Gastrocnemius medialis (tissue), 4 donors: ENCODE measurements at regions of chr5 and their contacts with region 1.

Region 1: GRCh38 chr5:43556857-43557542 is at the start of gene PAIP1:
- DNase-seq: peak; percentile 65 to 77
- ATAC-seq: peak; percentile 91 to 92
- H3K4me3 ChIP-seq: peak within 1 kb of the TSS; percentile 66 to 96 (median 73)
- H3K27ac ChIP-seq: peak within 1 kb of the TSS; percentile 86 to 98 (median 94)
- H3K4me1 ChIP-seq: peaks cover 38 to 40% of the 10 kb centered on the region in 2 donors
- H3K27me3 ChIP-seq: no peaks in the 10 kb centered on the region
- CTCF ChIP-seq: peak; percentile 33 to 85 (median 78)
- POLR2A ChIP-seq: peak; percentile 6 to 39
- total RNA-seq, gene PAIP1: 123 to 184 (median 161) TPM

Region 2: GRCh38 chr5:43514816-43515677 is 42.0 kb before region 1 on chr5 and contains the start of gene C5orf34:
- in situ Hi-C with region 1: no loop called
- intact Hi-C with region 1: loop called (anchors 1 kb)
- DNase-seq: peak; percentile 95
- ATAC-seq: peak; percentile 99 to 100
- H3K4me3 ChIP-seq: peak within 1 kb of the TSS; percentile 69 to 83 (median 81)
- H3K27ac ChIP-seq: peak within 1 kb of the TSS; percentile 80 to 90 (median 85)
- H3K4me1 ChIP-seq: peaks cover 12% of the 10 kb centered on the region in 2 donors
- H3K27me3 ChIP-seq: no peaks in the 10 kb centered on the region
- CTCF ChIP-seq: no peak
- POLR2A ChIP-seq: peak; percentile 40 to 50
- total RNA-seq, gene C5orf34: 0.16 to 0.27 (median 0.20) TPM in 3 of 4 donors, not detected in the other

Region 3: DNA sequence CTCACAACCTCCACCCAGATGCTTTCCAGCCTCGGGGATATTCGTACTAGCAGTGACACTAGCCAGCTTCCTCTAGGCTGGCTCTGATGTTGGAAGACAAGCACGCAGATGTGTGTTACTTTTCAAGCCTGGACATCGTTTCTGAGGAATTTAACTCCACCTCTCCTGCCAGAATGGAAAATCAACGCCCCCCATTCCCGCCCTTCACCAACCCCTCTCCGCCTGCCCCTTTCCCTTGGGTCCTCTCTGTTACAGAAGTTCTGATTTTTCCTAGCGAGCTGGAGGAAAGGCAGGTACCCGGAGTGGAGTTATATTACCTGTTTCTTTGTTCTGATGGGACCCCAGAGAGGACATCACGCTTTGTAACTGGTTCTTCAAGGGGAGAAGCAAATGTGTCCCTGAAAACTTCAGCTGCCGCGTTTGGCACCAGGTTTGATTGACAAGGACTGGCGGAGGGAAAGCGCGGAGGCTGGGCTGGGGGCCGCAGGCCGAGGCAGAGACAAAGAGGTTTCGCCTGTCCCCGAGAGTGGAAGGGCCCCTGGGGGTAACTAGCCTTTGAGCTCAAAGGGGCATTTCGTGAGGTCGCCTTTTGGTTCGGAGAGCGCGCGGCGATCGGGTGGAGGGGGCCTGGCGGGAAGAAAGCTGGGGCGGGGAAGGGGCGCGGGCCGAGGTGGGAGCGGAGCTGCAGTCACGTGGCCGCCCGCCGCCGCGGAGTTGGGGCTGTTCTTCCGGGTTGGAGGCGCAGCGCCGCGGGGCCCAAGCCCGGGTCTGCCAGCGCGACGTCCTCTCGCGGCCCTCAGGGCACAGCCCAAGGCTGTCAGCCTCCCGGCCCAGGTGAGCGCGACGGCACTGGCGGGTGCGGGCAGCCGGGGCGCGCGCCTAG is 45.7 kb after region 1 on chr5 and contains the start of gene NNT:
- in situ Hi-C with region 1: no loop called
- intact Hi-C with region 1: loop called (anchors 1 kb)
- DNase-seq: peak; percentile 75 to 78
- ATAC-seq: peak; percentile 45 to 46
- H3K4me3 ChIP-seq: peak within 1 kb of the TSS; percentile 75 to 85 (median 82)
- H3K27ac ChIP-seq: peak within 1 kb of the TSS; percentile 92 to 98 (median 97)
- H3K4me1 ChIP-seq: peaks cover 46 to 64% of the 10 kb centered on the region in 2 donors
- H3K27me3 ChIP-seq: no peaks in the 10 kb centered on the region
- CTCF ChIP-seq: peak in 1 of 5 experiments; percentile 8
- POLR2A ChIP-seq: peak; percentile 62 to 66
- total RNA-seq, gene NNT: 90.3 to 149 (median 127) TPM

Region 4: GRCh38 chr5:43631182-43631910 is 74.3 kb after region 1 on chr5:
- in situ Hi-C with region 1: loop called in 1 of 4 experiments (anchors 10 kb)
- intact Hi-C with region 1: loop called (anchors 2 kb)
- DNase-seq: peak; percentile 54 to 77
- ATAC-seq: peak; percentile 88 to 93
- H3K4me3 ChIP-seq: no peak overlapping the region
- H3K27ac ChIP-seq: peak overlapping the region; percentile 69 to 79 (median 76)
- H3K4me1 ChIP-seq: peaks cover 42 to 58% of the 10 kb centered on the region in 2 donors
- H3K27me3 ChIP-seq: no peaks in the 10 kb centered on the region
- CTCF ChIP-seq: peak; percentile 50 to 75 (median 61)
- POLR2A ChIP-seq: no peak

Region 5: DNA sequence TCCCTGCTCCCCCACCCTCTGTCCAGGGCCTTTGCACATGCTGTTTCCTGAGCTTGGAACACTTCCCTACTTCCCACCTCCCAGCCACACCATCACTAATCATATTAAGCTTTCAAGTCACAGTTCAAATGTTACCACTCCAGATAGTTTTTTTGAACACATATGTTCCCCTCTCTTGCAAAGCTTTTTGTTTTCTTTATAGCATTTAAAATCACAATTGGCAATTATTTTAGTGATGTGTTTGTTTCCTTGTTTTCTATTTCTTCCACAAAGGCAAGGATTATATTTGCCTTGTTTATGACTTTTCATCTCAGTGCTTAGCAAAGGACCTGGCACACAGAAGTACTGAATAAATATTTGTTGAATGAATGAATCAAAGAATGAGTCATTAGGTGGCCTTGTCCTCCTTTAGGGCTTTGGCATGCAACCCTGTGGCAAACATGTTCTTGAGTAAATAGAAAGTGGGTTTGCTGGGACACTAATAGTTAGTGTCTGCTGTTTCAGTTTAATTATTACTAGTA is 445.4 kb after region 1 on chr5:
- in situ Hi-C with region 1: no loop called
- intact Hi-C with region 1: no loop called
- DNase-seq: no peak
- ATAC-seq: no peak
- H3K4me3 ChIP-seq: no peak overlapping the region
- H3K27ac ChIP-seq: no peak overlapping the region
- H3K4me1 ChIP-seq: no peaks in the 10 kb centered on the region
- H3K27me3 ChIP-seq: no peaks in the 10 kb centered on the region
- CTCF ChIP-seq: no peak
- POLR2A ChIP-seq: no peak